Activated T-helper 2 cell treated with anti-CD3 and anti-CD28 coated beads, Interferon-gamma antibody, Interleukin-2, Interleukin-4, amounts not matched to agents 10 μg/mL and 5 μg/mL and 100 μg/mL, durations not matched to agents 14 hours and 24 hours and 36 hours (primary cell): ENCODE measurements at regions of chr19 and their contacts with region 1.

Region 1: GRCh38 chr19:47190167-47190727 is 40.8 kb downstream of the BBC3 start:
- DNase-seq: peak; percentile 47
- H3K4me3 Mint-ChIP-seq: peak overlapping the region; percentile 59
- H3K27ac Mint-ChIP-seq: peak overlapping the region; percentile 70
- H3K4me1 Mint-ChIP-seq: peaks cover 55% of the 10 kb centered on the region
- H3K27me3 Mint-ChIP-seq: no peaks in the 10 kb centered on the region

Region 2: DNA sequence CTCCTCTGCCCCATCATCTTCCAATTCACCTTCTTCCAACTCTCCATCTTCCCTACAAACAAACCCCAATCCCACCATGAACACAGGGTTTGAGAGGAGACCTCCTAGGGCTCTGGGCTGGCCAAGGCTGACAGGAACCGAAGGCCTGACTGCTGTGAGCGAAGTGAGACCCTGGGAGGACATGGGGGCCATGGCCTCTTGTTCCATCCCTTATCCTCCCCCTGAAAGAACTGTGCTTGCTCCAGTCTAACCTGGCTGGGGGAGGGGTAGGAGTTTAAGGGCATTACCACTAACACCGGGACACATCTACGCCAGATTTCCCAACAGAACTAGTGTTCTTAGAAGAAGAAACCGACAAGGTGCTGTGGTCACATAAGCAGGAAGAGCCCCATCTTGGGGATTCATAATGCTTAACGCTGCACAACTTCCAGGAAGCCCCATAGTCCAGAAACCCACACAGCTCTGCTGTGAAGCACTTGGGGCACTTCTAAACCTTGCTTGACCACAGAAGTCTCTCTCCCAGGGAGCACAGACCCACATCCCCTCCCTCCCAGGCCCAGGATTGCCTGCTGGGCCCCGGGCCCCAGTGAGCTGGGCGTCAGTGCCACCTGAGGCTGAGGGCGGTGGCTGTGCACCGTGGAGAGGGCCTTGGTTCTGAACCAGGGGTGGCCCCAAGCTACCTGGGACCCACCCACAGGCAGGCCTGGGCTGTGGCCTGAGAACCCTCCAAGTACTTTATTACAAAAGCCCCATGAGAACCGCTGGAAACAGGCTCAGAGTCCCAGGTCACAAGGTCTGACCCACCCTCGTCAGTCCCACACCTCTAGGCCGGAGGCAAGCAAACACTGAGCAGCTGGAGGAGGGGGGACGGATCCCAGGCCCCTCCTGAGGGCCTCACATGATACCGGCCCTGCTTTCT is 95.4 kb before region 1 on chr19:
- intact Hi-C with region 1: loop called (anchors 2 kb)
- DNase-seq: peak; percentile 52
- H3K4me3 Mint-ChIP-seq: peak overlapping the region; percentile 95
- H3K27ac Mint-ChIP-seq: peak overlapping the region; percentile 100
- H3K4me1 Mint-ChIP-seq: peaks cover 62% of the 10 kb centered on the region
- H3K27me3 Mint-ChIP-seq: no peaks in the 10 kb centered on the region

Region 3: GRCh38 chr19:47145639-47146486 is 44.4 kb before region 1 on chr19:
- intact Hi-C with region 1: loop called (anchors 2 kb)
- DNase-seq: no peak
- H3K4me3 Mint-ChIP-seq: peak overlapping the region; percentile 6
- H3K27ac Mint-ChIP-seq: peak overlapping the region; percentile 19
- H3K4me1 Mint-ChIP-seq: peaks cover 39% of the 10 kb centered on the region
- H3K27me3 Mint-ChIP-seq: no peaks in the 10 kb centered on the region

Region 4: DNA sequence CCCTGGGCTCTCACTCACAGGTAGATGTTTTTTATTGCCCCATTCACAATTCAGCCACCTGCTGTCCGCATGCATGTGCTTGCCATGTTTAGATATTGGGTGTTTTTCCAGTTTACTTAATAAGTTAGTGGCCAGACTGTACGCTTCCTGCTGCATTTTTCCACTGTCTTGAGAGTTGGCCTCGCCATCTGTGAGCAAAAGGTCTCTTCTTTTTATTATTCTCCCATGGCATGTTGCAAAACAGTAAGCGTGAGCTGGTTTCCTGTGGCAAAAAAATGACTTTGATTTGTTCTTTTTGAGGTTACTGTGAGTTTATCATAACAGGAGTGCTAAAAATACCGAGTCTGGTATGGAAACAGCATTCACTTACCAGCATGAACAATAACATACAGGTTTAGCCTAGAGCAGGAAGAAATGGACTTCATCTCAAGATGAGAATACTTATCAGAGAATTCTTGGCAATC is 13.6 kb before region 1 on chr19:
- intact Hi-C with region 1: loop called (anchors 1 kb)
- DNase-seq: peak; percentile 25
- H3K4me3 Mint-ChIP-seq: peak overlapping the region; percentile 51
- H3K27ac Mint-ChIP-seq: peak overlapping the region; percentile 93
- H3K4me1 Mint-ChIP-seq: peaks cover 48% of the 10 kb centered on the region
- H3K27me3 Mint-ChIP-seq: no peaks in the 10 kb centered on the region

Region 5: GRCh38 chr19:47243776-47244547 is 53.7 kb after region 1 on chr19:
- intact Hi-C with region 1: loop called (anchors 1 kb)
- DNase-seq: peak; percentile 92
- H3K4me3 Mint-ChIP-seq: peak overlapping the region; percentile 84
- H3K27ac Mint-ChIP-seq: peak overlapping the region; percentile 89
- H3K4me1 Mint-ChIP-seq: peaks cover 16% of the 10 kb centered on the region
- H3K27me3 Mint-ChIP-seq: peaks cover 3% of the 10 kb centered on the region